ENCODE measurements at regions of chr2 and their contacts with region 1.

Region 1: GRCh38 chr2:43484323-43484930 is 111.4 kb downstream of the THADA start:
- DNase-seq: no peak
- ATAC-seq: peak; percentile 65 to 76

Region 2: GRCh38 chr2:42828487-42829425 is 655.7 kb before region 1 on chr2:
- intact Hi-C with region 1: loop called in 1 of 2 experiments (anchors 5 kb)
- DNase-seq: peak; percentile 80
- ATAC-seq: peak; percentile 92 to 94

Region 3: GRCh38 chr2:42944779-42945415 is 539.5 kb before region 1 on chr2:
- intact Hi-C with region 1: loop called in 1 of 2 experiments (anchors 10 kb)
- DNase-seq: no peak
- ATAC-seq: no peak

Region 4: DNA sequence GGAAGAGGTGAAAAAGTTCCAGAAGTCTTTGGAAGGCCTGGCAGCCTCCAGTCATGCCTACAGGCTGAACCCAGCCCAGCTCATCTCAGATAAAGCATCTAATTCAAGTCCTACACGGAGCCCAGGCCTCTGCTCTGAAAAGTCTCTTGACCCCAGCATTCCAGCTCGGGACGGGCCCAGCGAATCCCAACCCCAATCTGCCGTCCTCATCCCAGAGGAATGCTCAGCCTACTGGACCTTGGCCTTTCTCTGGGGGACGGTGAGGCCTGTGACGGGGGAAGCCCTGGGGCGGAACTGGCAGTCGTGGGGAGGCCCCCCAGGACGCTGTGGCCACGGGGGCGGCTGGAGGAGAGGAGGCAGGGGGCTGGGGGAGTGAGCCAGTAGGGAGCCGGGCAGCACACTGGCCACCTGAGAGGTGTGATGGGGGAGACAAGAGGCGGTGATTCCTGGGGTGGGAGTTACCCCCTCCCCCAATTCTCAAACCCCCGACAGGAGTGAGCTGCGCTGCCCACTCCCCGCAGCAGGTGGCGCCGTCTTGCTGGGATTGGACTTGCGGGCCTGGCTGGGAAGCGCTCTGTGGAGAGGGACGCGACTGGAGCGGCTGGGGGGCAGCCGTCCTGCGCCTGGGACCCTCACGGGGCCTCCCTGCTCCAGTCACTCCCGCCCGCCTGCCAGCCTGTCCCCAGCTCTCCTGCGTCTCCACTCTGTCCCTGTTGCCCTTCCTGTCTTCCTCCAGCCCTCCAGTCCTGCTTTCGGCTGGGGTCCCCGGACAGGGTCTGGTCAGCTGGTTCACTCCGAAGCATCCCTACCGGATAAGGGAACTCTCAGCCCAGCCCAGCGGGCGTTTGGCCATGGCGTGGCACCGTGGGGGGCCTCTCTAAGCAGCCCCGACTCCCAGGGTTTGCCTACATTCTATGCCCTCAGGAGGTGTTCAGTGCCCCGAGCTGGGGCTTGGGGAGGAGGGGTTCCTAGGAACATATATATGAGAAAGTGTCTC is 509.4 kb before region 1 on chr2:
- intact Hi-C with region 1: loop called (anchors 2 to 10 kb)
- DNase-seq: peak; percentile 80
- ATAC-seq: peak; percentile 91 to 92

Region 5: DNA sequence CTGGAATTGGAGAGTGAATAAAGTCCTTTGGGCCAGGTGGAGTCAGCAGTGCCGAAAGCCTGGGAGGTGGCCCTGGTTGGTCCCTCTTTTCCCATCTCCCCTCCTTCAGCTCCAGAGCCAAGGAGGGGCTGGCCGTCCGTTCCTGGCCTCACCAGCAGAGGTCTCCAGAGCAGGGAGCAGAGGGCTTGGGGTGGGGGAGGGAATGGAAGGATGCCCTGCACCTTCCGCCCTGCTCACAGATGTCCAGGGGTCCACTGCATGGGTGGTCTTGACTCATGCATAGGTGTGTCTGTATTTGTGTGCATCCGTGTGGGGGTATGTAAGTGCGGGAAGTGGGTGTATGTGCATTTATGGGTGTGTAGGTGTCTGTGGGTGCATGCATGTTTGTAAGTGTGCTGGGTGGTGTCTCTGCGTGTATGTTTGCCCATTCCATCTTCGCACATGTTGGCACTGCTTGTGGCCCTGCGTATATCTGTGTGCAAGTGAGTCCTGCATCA is 459.9 kb before region 1 on chr2:
- intact Hi-C with region 1: loop called in 1 of 2 experiments (anchors 5 kb)
- DNase-seq: peak; percentile 73
- ATAC-seq: peak; percentile 71 to 79

Region 6: GRCh38 chr2:43131024-43131889 is 353.2 kb before region 1 on chr2:
- intact Hi-C with region 1: loop called (anchors 10 kb)
- DNase-seq: peak; percentile 73
- ATAC-seq: peak; percentile 35 to 71

Region 7: GRCh38 chr2:43305517-43305916 is 178.9 kb before region 1 on chr2:
- intact Hi-C with region 1: loop called in 1 of 2 experiments (anchors 10 kb)
- DNase-seq: peak; percentile 55
- ATAC-seq: peak; percentile 60 to 82

Measured in left cardiac atrium (tissue), 4 donors.